ENCODE measurements at regions of chr4 and their contacts with region 1.

Region 1: GRCh38 chr4:111854494-111855087 is 290.7 kb upstream of the FAM241A start:
- DNase-seq: no peak
- H3K4me3 ChIP-seq: no peak overlapping the region
- H3K27ac ChIP-seq: no peak overlapping the region
- H3K4me1 ChIP-seq: no peaks in the 10 kb centered on the region
- H3K27me3 ChIP-seq: no peaks in the 10 kb centered on the region
- CTCF ChIP-seq: peak; percentile 55 to 60

Region 2: DNA sequence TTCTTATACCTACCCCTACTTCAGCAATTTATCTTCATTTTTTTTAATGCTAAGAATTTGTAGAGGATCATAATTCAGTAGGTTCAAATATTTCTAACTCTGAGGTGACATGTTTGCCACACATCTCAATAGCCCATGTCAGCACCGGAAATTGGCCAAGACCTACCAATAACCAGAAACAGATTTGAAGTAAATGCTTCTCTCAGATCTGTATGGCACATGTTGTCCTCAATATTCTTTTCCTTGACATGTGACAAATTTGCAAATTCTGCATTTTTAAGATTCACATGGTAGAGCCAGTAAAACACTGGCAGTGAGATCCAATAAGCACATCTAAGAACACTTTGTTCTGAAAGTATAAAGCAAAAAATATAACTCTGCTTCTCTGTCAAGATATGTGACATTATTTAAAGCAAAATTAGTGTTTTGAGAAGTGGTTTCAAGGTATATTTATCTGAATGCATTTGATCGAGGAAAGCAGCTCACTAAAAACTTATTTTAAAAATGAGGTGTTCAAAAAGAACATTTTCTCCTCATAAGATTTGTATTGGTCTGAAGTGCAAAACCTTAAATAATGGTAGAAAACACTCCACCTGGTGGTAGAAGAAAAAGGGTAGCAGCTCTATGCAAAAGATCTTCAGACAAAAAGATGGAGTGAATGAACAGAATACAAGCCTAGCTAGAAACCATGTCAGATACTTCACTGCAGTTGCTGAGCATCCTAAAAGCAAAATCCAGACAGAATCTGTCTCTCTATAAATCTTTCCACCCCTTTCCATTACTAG is 223.2 kb before region 1 on chr4:
- intact Hi-C with region 1: loop called (anchors 5 kb)
- DNase-seq: no peak
- H3K4me3 ChIP-seq: no peak overlapping the region
- H3K27ac ChIP-seq: no peak overlapping the region
- H3K4me1 ChIP-seq: no peaks in the 10 kb centered on the region
- H3K27me3 ChIP-seq: peaks cover 0 to 11% of the 10 kb centered on the region in 2 donors
- CTCF ChIP-seq: no peak

Region 3: GRCh38 chr4:111641955-111642579 is 212.5 kb before region 1 on chr4:
- intact Hi-C with region 1: loop called (anchors 5 kb)
- DNase-seq: peak; percentile 61 to 64
- H3K4me3 ChIP-seq: no peak overlapping the region
- H3K27ac ChIP-seq: no peak overlapping the region
- H3K4me1 ChIP-seq: no peaks in the 10 kb centered on the region
- H3K27me3 ChIP-seq: no peaks in the 10 kb centered on the region
- CTCF ChIP-seq: peak; percentile 66 to 69

Region 4: GRCh38 chr4:111697176-111697942 is 157.2 kb before region 1 on chr4:
- intact Hi-C with region 1: no loop called
- DNase-seq: no peak
- H3K4me3 ChIP-seq: no peak overlapping the region
- H3K27ac ChIP-seq: no peak overlapping the region
- H3K4me1 ChIP-seq: peaks cover 0 to 19% (median 0%) of the 10 kb centered on the region in 4 donors
- H3K27me3 ChIP-seq: no peaks in the 10 kb centered on the region
- CTCF ChIP-seq: no peak

Measured in tibial artery (tissue), 4 donors.